Left ventricle myocardium inferior (tissue), 1 donor: ENCODE measurements at regions of chr7 and their contacts with region 1.

Region 1: DNA sequence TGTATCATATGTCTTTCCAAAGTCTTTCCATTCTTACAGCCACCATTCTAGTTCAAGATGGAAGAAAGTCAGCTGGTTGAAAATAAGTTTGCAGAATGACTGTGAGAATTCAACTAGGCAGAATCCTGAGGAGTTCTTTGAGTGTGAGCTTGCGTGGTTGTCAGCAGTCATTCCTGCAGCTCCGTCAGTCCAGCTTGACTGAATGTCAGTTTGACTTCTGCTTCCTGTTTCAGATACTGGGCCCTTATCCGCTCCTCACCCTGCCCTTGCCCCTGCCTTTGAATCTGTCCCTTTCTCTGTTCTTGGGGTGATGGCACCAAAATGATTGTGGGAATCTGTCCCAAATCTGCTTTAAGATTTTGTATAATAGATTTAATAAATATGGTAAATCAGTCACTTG is 27.8 kb downstream of the SLC26A5 start:
- DNase-seq: no peak
- H3K4me3 ChIP-seq: no peak overlapping the region
- H3K27ac ChIP-seq: no peak overlapping the region
- H3K4me1 ChIP-seq: no peaks in the 10 kb centered on the region
- H3K27me3 ChIP-seq: peaks cover 15% of the 10 kb centered on the region
- CTCF ChIP-seq: no peak

Region 2: DNA sequence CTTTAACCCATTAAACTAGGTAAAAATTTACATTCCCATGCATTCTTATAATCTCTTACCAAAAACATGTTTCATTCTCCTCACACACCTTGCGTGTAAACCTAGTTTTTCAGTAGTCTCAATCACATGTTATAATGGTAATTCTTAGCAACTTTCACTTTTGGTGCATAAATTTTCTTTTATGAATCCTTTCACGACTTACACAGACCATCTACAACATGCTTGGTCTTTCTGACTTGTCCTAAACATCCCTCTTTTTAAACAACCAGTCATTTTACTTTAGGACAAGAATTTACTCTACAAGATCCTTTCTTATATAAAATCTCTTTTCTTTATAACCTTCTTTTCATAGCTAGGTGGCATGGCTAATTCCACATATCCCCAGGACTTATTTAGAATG is 369.4 kb before region 1 on chr7:
- intact Hi-C with region 1: no loop called
- DNase-seq: no peak
- H3K4me3 ChIP-seq: no peak overlapping the region
- H3K27ac ChIP-seq: no peak overlapping the region
- H3K4me1 ChIP-seq: no peaks in the 10 kb centered on the region
- H3K27me3 ChIP-seq: no peaks in the 10 kb centered on the region
- CTCF ChIP-seq: no peak

Region 3: DNA sequence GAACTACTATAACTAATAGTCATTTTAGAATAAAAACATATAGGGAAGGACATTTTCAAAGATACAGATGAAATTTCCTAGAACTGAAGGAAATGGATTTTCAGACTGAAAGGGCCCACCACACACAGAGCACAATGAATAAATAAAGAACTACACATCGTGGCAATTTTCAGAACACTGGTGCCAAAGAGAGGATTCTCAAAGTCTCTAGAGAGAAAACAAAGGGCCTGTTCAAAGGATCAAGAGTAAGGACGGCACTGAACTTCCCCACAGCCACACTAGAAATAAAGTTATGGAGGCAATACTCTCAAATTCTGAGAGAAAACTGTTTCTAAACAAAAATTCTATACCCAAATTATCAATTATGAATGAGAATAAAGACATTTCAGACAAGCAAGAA is 291.2 kb before region 1 on chr7:
- intact Hi-C with region 1: no loop called
- DNase-seq: no peak
- H3K4me3 ChIP-seq: no peak overlapping the region
- H3K27ac ChIP-seq: no peak overlapping the region
- H3K4me1 ChIP-seq: peaks cover 7% of the 10 kb centered on the region
- H3K27me3 ChIP-seq: no peaks in the 10 kb centered on the region
- CTCF ChIP-seq: no peak

Region 4: GRCh38 chr7:103388469-103389140 is 29.6 kb before region 1 on chr7:
- intact Hi-C with region 1: loop called (anchors 2 kb)
- DNase-seq: no peak
- H3K4me3 ChIP-seq: no peak overlapping the region
- H3K27ac ChIP-seq: no peak overlapping the region
- H3K4me1 ChIP-seq: no peaks in the 10 kb centered on the region
- H3K27me3 ChIP-seq: peaks cover 18% of the 10 kb centered on the region
- CTCF ChIP-seq: no peak

Region 5: GRCh38 chr7:103710247-103710646 is 292.0 kb after region 1 on chr7:
- intact Hi-C with region 1: no loop called
- DNase-seq: no peak
- H3K4me3 ChIP-seq: no peak overlapping the region
- H3K27ac ChIP-seq: no peak overlapping the region
- H3K4me1 ChIP-seq: no peaks in the 10 kb centered on the region
- H3K27me3 ChIP-seq: no peaks in the 10 kb centered on the region
- CTCF ChIP-seq: no peak